Heart right ventricle (tissue), 16 donors: ENCODE measurements at regions of chr17 and their contacts with region 1.

Region 1: DNA sequence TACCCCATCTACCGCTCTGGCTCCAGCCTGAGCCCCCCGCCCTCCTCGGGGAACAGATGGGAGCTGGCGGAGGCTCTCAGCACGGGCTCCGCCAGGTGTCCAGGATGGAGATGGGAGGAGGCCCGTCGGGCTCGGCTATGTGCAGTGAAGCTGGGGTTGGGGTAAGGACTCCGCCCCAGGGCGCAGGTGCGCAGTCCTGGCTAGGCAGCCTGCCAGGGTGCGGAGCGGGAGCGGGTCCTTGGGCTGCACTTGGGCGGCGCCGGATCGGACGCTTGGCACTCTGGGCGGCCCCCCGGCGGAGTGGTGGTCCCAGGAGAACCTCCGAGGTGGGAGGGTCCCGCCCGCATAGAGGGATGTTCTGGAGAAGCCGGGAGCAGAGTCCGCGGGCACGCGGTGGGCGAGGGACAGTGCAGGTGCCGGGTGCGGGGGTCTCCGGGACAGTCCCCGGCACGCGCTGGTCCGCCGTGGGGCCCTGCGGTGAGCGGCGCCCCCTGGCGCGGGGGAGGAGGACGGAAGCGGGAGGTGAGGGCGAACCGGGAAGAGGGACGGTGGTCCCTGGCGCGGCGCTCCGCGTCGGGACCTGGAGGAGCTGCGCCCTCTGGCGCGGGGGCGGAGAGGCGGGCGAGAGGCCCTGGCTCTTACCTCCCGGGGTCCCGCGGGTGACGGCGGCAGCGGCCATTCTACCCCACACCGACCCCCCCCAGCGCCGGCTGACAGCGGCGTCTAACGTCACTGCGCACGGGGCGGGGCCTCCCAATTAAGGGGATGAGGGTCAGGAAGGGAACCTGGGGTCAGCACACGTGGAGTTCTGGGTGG is at the start of gene CAMTA2:
- DNase-seq: peak; percentile 94
- ATAC-seq: peak; percentile 94 to 97 (median 96)
- H3K4me3 ChIP-seq: peak within 1 kb of the TSS; percentile 61 to 97 (median 89)
- H3K27ac ChIP-seq: peak within 1 kb of the TSS; percentile 83 to 98 (median 95)
- H3K4me1 ChIP-seq: peaks cover 5 to 44% (median 26%) of the 10 kb centered on the region in 9 donors
- H3K27me3 ChIP-seq: no peaks in the 10 kb centered on the region
- CTCF ChIP-seq: peak; percentile 58 to 93 (median 78)
- total RNA-seq, gene CAMTA2: 26.0 to 42.0 (median 33.7) TPM

Region 2: GRCh38 chr17:4747847-4748246 is 239.3 kb before region 1 on chr17:
- intact Hi-C with region 1: no loop called
- DNase-seq: no peak
- ATAC-seq: peak in 7 of 8 donors; percentile 49 to 86 (median 77)
- H3K4me3 ChIP-seq: no peak overlapping the region
- H3K27ac ChIP-seq: peak overlapping the region in 5 of 10 donors; percentile 20 to 69 (median 39)
- H3K4me1 ChIP-seq: peaks cover 0 to 44% (median 16%) of the 10 kb centered on the region in 9 donors
- H3K27me3 ChIP-seq: peaks cover 0 to 62% (median 42%) of the 10 kb centered on the region in 7 donors
- CTCF ChIP-seq: no peak

Region 3: DNA sequence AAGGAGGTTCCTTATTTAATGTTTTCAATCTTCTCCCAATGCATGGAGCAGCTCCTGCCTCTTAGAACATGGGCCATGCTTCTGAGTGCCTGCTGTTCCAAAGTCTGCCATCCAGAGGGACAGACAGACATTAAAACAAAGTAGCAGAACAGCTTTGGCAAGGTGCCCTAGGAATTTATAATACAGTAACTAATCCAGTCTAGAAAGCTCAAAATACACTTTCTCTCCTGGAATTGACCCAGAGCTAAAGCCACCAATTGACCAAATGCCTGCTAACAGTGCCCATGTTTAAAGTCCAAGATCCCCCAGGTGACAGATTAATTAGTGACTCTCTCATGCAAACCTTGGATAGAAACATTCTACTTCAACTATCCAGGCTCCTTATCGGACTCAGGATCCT is 73.2 kb before region 1 on chr17:
- intact Hi-C with region 1: loop called in 7 of 10 experiments (anchors 1 to 10 kb)
- DNase-seq: no peak
- ATAC-seq: no peak
- H3K4me3 ChIP-seq: no peak overlapping the region
- H3K27ac ChIP-seq: no peak overlapping the region
- H3K4me1 ChIP-seq: peaks cover 0 to 9% (median 6%) of the 10 kb centered on the region in 9 donors
- H3K27me3 ChIP-seq: no peaks in the 10 kb centered on the region
- CTCF ChIP-seq: no peak

Region 4: GRCh38 chr17:4939796-4940624 is 47.1 kb before region 1 on chr17 and contains the starts of genes RNF167 and SLC25A11:
- intact Hi-C with region 1: loop called in 4 of 10 experiments (anchors 5 to 10 kb)
- DNase-seq: peak; percentile 92 to 96
- ATAC-seq: peak; percentile 93 to 96 (median 95)
- H3K4me3 ChIP-seq: peak within 1 kb of the TSS; percentile 50 to 95 (median 85)
- H3K27ac ChIP-seq: peak within 1 kb of the TSS; percentile 89 to 98 (median 94)
- H3K4me1 ChIP-seq: peaks cover 18 to 65% (median 42%) of the 10 kb centered on the region in 9 donors
- H3K27me3 ChIP-seq: no peaks in the 10 kb centered on the region
- CTCF ChIP-seq: peak in 2 of 9 donors; percentile 12 to 15
- total RNA-seq, gene RNF167: 65.0 to 104 (median 80.9) TPM
- total RNA-seq, gene SLC25A11: 181 to 312 (median 242) TPM

Region 5: DNA sequence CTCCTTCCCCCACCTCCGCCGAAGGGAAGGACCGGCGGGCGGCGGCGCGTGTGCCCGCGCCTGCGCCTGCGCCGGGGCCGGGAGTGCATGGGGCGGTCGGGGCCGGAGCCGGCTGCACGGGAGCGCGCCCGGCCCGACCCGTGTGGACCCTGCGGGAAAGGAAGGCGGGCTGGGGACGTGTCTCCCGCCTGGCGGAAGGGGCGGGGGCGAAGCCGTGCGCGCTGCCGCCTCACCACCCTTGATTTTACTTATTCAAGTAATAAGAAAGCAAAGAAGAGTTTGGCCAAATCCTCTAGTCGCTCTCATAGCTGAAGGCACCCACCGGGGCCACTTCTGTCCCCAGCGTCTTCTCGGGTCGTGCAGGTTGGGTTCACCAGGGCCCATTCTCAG is 38.2 kb before region 1 on chr17:
- intact Hi-C with region 1: loop called in 3 of 10 experiments (anchors 2 to 5 kb)
- DNase-seq: peak; percentile 83 to 87
- ATAC-seq: peak; percentile 72 to 87 (median 82)
- H3K4me3 ChIP-seq: peak overlapping the region; percentile 32 to 100 (median 98)
- H3K27ac ChIP-seq: peak overlapping the region; percentile 89 to 100 (median 99)
- H3K4me1 ChIP-seq: peaks cover 18 to 76% (median 51%) of the 10 kb centered on the region in 9 donors
- H3K27me3 ChIP-seq: no peaks in the 10 kb centered on the region
- CTCF ChIP-seq: no peak

Region 6: GRCh38 chr17:4966844-4967538 is 20.2 kb before region 1 on chr17:
- intact Hi-C with region 1: loop called in 1 of 10 experiments (anchors 1 kb)
- DNase-seq: peak; percentile 96 to 99
- ATAC-seq: peak; percentile 88 to 95 (median 92)
- H3K4me3 ChIP-seq: peak overlapping the region; percentile 53 to 82 (median 72)
- H3K27ac ChIP-seq: peak overlapping the region; percentile 89 to 97 (median 96)
- H3K4me1 ChIP-seq: peaks cover 11 to 45% (median 34%) of the 10 kb centered on the region in 9 donors
- H3K27me3 ChIP-seq: no peaks in the 10 kb centered on the region
- CTCF ChIP-seq: no peak

Region 7: GRCh38 chr17:5260554-5260953 is 273.4 kb after region 1 on chr17:
- intact Hi-C with region 1: no loop called
- DNase-seq: no peak
- ATAC-seq: no peak
- H3K4me3 ChIP-seq: no peak overlapping the region
- H3K27ac ChIP-seq: no peak overlapping the region
- H3K4me1 ChIP-seq: no peaks in the 10 kb centered on the region
- H3K27me3 ChIP-seq: no peaks in the 10 kb centered on the region
- CTCF ChIP-seq: no peak

Region 8: DNA sequence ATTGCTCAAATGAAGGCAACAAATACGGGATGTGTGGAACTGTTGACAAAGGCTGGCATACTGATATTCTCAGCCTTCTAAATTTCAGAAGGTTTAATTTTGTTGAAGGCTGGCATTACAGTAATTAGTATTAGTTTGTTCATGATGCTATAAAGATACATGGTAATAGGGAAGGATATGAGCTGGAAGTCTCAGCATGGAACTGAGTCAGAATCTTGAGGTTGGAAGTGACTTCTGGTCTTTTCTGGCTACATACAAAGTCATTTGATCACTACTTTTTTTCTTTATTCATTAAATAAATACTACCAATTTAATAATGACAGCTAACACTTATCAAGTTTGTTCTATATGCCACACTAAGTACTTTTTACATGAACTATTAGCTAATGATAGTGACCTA is 317.5 kb after region 1 on chr17:
- intact Hi-C with region 1: no loop called
- DNase-seq: no peak
- ATAC-seq: no peak
- H3K4me3 ChIP-seq: no peak overlapping the region
- H3K27ac ChIP-seq: no peak overlapping the region
- H3K4me1 ChIP-seq: peaks cover 0 to 44% (median 20%) of the 10 kb centered on the region in 9 donors
- H3K27me3 ChIP-seq: no peaks in the 10 kb centered on the region
- CTCF ChIP-seq: no peak